ENCODE measurements at regions of chr17 and their contacts with region 1.

Region 1: DNA sequence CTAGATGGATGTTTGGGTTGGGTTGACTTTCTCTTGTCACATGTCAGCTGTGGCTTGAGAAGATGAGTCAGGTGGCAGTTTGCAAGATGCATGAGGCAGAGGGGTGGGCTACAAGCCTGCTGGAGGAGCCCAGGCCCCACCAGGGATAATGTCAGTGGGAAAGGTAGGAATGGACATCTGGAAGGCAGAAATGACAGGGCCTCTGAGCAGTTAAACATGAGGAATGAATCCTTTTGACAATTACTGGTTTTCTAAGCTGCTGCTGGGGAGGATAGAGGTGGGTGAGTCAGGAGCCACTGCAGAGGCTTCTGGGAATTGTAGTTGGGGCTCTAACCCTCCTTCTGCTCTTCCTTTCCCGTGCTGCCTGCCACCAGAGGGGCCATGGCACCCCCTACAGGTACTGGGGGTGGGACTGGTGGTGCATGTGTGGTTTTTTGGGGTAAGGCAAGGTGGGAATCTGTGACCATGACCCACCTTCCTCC is 15.7 kb downstream of the SLC52A1 start:
- DNase-seq: peak; percentile 31
- ATAC-seq: peak; percentile 49
- H3K4me3 Mint-ChIP-seq: no peak overlapping the region
- H3K27ac Mint-ChIP-seq: peak overlapping the region; percentile 32
- H3K4me1 Mint-ChIP-seq: peaks cover 28% of the 10 kb centered on the region
- H3K27me3 Mint-ChIP-seq: no peaks in the 10 kb centered on the region
- CTCF ChIP-seq: no peak

Region 2: GRCh38 chr17:4908301-4908700 is 111.2 kb before region 1 on chr17:
- CTCF ChIA-PET with region 1: interaction called, 5 read pairs
- POLR2A ChIA-PET with region 1: interaction called, 5 read pairs
- intact Hi-C with region 1: loop called (anchors 1 kb)
- DNase-seq: no peak
- ATAC-seq: no peak
- H3K4me3 Mint-ChIP-seq: no peak overlapping the region
- H3K27ac Mint-ChIP-seq: no peak overlapping the region
- H3K4me1 Mint-ChIP-seq: peaks cover 4% of the 10 kb centered on the region
- H3K27me3 Mint-ChIP-seq: peaks cover 2% of the 10 kb centered on the region
- CTCF ChIP-seq: no peak

Region 3: DNA sequence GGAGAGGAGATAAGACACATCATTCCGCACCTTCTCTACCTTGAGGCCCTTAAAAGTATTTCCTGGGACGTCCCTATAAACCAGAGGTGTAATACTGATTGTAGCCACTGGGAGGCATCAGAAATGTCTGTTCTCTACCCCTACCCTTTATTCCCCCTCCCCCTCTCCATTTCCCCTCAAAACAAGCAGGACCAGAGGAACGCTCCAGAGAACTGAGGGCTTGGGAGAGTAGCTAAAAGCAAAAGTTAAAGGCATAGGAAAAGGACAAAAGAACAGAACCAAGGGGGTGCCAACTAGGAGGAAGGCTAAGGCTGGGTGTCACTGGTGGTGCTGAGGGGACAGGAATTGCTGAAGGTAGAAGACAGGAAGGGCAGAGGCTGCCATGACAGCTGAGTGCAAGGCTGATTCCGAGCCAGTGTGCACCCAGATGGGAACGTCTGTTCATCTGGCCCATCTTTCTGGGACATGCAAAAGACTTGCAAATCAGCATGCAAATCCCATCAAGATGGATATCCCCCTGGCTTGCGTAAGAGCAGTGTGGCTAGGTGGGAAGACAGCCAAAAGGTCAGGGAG is 38.8 kb before region 1 on chr17:
- CTCF ChIA-PET with region 1: interaction called, 18 read pairs
- POLR2A ChIA-PET with region 1: interaction called, 5 read pairs
- intact Hi-C with region 1: no loop called
- DNase-seq: no peak
- ATAC-seq: peak; percentile 68
- H3K4me3 Mint-ChIP-seq: peak overlapping the region; percentile 2
- H3K27ac Mint-ChIP-seq: peak overlapping the region; percentile 37
- H3K4me1 Mint-ChIP-seq: peaks cover 41% of the 10 kb centered on the region
- H3K27me3 Mint-ChIP-seq: no peaks in the 10 kb centered on the region
- CTCF ChIP-seq: peak; percentile 55

Region 4: GRCh38 chr17:4997302-4998026 is 22.1 kb before region 1 on chr17 and contains the starts of genes INCA1 and KIF1C:
- CTCF ChIA-PET with region 1: interaction called, 3 read pairs
- POLR2A ChIA-PET with region 1: interaction called, 21 read pairs
- intact Hi-C with region 1: loop called (anchors 1 kb)
- DNase-seq: peak; percentile 95
- ATAC-seq: peak; percentile 95
- H3K4me3 Mint-ChIP-seq: peak within 1 kb of the TSS; percentile 85
- H3K27ac Mint-ChIP-seq: peak within 1 kb of the TSS; percentile 90
- H3K4me1 Mint-ChIP-seq: peaks cover 20% of the 10 kb centered on the region
- H3K27me3 Mint-ChIP-seq: no peaks in the 10 kb centered on the region
- CTCF ChIP-seq: no peak
- total RNA-seq, gene INCA1: 0.17 and 0.44 TPM in 2 replicates
- total RNA-seq, gene KIF1C: 62.6 and 63.8 TPM in 2 replicates

Region 5: DNA sequence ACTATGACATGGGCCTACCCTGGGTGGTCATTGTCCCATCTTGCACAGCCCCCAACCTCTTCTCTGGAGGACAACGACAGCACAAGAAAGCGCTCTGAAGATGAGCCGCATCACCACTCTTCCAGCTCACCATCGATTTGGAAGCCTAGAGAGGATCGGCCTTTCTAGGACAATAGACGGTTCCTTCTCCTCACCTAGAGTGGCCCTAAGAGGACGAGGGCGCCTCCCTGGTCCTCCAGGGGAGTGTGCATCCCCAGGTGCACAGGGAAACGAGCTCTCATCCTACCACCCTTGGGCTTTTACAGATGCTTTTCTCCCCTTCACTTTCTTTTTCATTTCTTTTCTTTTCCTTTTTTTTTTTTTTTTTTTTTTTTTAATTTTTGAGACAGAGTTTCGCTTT is 36.0 kb after region 1 on chr17:
- CTCF ChIA-PET with region 1: no interaction called
- POLR2A ChIA-PET with region 1: interaction called, 14 read pairs
- intact Hi-C with region 1: no loop called
- DNase-seq: no peak
- ATAC-seq: no peak
- H3K4me3 Mint-ChIP-seq: no peak overlapping the region
- H3K27ac Mint-ChIP-seq: no peak overlapping the region
- H3K4me1 Mint-ChIP-seq: peaks cover 19% of the 10 kb centered on the region
- H3K27me3 Mint-ChIP-seq: no peaks in the 10 kb centered on the region
- CTCF ChIP-seq: no peak

Region 6: GRCh38 chr17:5225668-5226457 is 206.3 kb after region 1 on chr17:
- CTCF ChIA-PET with region 1: no interaction called
- POLR2A ChIA-PET with region 1: no interaction called
- intact Hi-C with region 1: no loop called
- DNase-seq: no peak
- ATAC-seq: peak; percentile 19
- H3K4me3 Mint-ChIP-seq: peak overlapping the region; percentile 75
- H3K27ac Mint-ChIP-seq: peak overlapping the region; percentile 98
- H3K4me1 Mint-ChIP-seq: peaks cover 100% of the 10 kb centered on the region
- H3K27me3 Mint-ChIP-seq: no peaks in the 10 kb centered on the region
- CTCF ChIP-seq: no peak

Measured in activated B cell treated with CpG ODN at 0.5 μM for 24 hours (primary cell).